B cell (primary cell): ENCODE measurements at regions of chr6 and their contacts with region 1.

Region 1: GRCh38 chr6:79777713-79778579 is 146.8 kb downstream of the SH3BGRL2 start:
- DNase-seq: peak; percentile 89
- ATAC-seq: peak; percentile 96
- H3K4me3 ChIP-seq: peak overlapping the region; percentile 11 to 78 (median 55)
- H3K4me3 Mint-ChIP-seq: peak overlapping the region; percentile 81
- H3K27ac ChIP-seq: peak overlapping the region in 1 of 2 donors; percentile 76
- H3K27ac Mint-ChIP-seq: peak overlapping the region; percentile 56
- H3K4me1 ChIP-seq: peaks cover 7 to 11% of the 10 kb centered on the region in 2 donors
- H3K4me1 Mint-ChIP-seq: peaks cover 9% of the 10 kb centered on the region
- H3K27me3 ChIP-seq: no peaks in the 10 kb centered on the region
- H3K27me3 Mint-ChIP-seq: no peaks in the 10 kb centered on the region
- CTCF ChIP-seq: peak; percentile 91

Region 2: GRCh38 chr6:79233611-79234149 is 544.3 kb before region 1 on chr6:
- CTCF ChIA-PET with region 1: no interaction called
- POLR2A ChIA-PET with region 1: no interaction called
- intact Hi-C with region 1: loop called (anchors 5 kb)
- DNase-seq: peak; percentile 75
- ATAC-seq: peak; percentile 35
- H3K4me3 ChIP-seq: peak overlapping the region; percentile 87 to 97 (median 93)
- H3K4me3 Mint-ChIP-seq: peak overlapping the region; percentile 95
- H3K27ac ChIP-seq: peak overlapping the region; percentile 52 to 66
- H3K27ac Mint-ChIP-seq: peak overlapping the region; percentile 90
- H3K4me1 ChIP-seq: peaks cover 5 to 7% of the 10 kb centered on the region in 2 donors
- H3K4me1 Mint-ChIP-seq: peaks cover 19% of the 10 kb centered on the region
- H3K27me3 ChIP-seq: no peaks in the 10 kb centered on the region
- H3K27me3 Mint-ChIP-seq: no peaks in the 10 kb centered on the region
- CTCF ChIP-seq: peak; percentile 27

Region 3: GRCh38 chr6:79525272-79526100 is 252.5 kb before region 1 on chr6:
- CTCF ChIA-PET with region 1: no interaction called
- POLR2A ChIA-PET with region 1: no interaction called
- intact Hi-C with region 1: no loop called
- DNase-seq: no peak
- ATAC-seq: no peak
- H3K4me3 ChIP-seq: no peak overlapping the region
- H3K4me3 Mint-ChIP-seq: no peak overlapping the region
- H3K27ac ChIP-seq: no peak overlapping the region
- H3K27ac Mint-ChIP-seq: no peak overlapping the region
- H3K4me1 ChIP-seq: no peaks in the 10 kb centered on the region
- H3K4me1 Mint-ChIP-seq: no peaks in the 10 kb centered on the region
- H3K27me3 ChIP-seq: no peaks in the 10 kb centered on the region
- H3K27me3 Mint-ChIP-seq: peaks cover 3% of the 10 kb centered on the region
- CTCF ChIP-seq: no peak

Region 4: GRCh38 chr6:79719248-79719960 is 58.5 kb before region 1 on chr6:
- CTCF ChIA-PET with region 1: no interaction called
- POLR2A ChIA-PET with region 1: no interaction called
- intact Hi-C with region 1: no loop called
- DNase-seq: no peak
- ATAC-seq: no peak
- H3K4me3 ChIP-seq: no peak overlapping the region
- H3K4me3 Mint-ChIP-seq: no peak overlapping the region
- H3K27ac ChIP-seq: no peak overlapping the region
- H3K27ac Mint-ChIP-seq: no peak overlapping the region
- H3K4me1 ChIP-seq: no peaks in the 10 kb centered on the region
- H3K4me1 Mint-ChIP-seq: no peaks in the 10 kb centered on the region
- H3K27me3 ChIP-seq: no peaks in the 10 kb centered on the region
- H3K27me3 Mint-ChIP-seq: peaks cover under 1% of the 10 kb centered on the region
- CTCF ChIP-seq: no peak

Region 5: GRCh38 chr6:79813854-79814709 is 36.1 kb after region 1 on chr6:
- CTCF ChIA-PET with region 1: interaction called, 8 read pairs
- POLR2A ChIA-PET with region 1: no interaction called
- intact Hi-C with region 1: loop called (anchors 1 kb)
- DNase-seq: peak; percentile 56
- ATAC-seq: peak; percentile 51
- H3K4me3 ChIP-seq: no peak overlapping the region
- H3K4me3 Mint-ChIP-seq: no peak overlapping the region
- H3K27ac ChIP-seq: no peak overlapping the region
- H3K27ac Mint-ChIP-seq: no peak overlapping the region
- H3K4me1 ChIP-seq: no peaks in the 10 kb centered on the region
- H3K4me1 Mint-ChIP-seq: no peaks in the 10 kb centered on the region
- H3K27me3 ChIP-seq: no peaks in the 10 kb centered on the region
- H3K27me3 Mint-ChIP-seq: peaks cover 15% of the 10 kb centered on the region
- CTCF ChIP-seq: peak; percentile 93

Region 6: DNA sequence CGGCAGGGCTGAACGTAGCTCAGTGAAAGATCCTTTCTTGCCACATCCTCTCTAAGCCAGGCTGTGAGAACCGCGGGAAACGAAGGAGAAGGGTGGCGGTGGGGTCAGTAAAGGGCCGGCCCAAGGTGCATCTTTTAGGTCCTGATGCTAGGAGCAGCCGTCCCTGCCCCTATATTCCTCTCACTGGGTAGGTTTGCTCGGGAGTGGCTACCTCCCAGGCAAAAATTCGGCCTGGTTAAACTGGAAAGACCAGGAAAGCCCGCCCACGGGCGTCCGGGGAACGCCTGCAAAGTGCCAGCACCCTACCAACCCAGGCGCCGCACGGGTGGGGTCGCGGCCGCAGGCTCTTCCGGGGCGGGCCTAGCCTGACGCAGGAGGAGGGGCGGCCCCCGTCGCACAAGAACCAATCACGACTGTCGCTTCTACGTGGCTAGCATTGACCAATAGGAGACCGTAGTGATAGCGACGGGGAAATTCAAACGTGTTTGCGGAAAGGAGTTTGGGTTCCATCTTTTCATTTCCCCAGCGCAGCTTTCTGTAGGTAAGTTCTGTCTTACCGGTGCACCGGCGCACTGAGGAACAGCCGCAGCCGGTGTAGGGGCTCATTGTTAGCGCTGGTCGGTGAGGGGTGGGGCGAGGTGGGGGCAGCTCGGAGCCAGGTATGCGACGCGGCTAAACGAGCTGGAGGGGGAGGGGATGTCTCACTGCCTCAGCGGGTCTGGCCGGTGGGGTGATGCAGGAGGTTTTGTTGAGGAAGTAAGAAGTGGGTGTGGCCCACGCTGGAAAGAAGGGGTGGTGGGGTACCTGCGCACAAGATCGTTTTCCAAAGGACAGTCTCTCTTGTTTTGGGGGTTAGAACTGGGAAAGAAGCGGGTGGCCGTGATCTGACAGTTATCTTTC is 226.5 kb after region 1 on chr6 and contains the start of gene TTK:
- CTCF ChIA-PET with region 1: no interaction called
- POLR2A ChIA-PET with region 1: no interaction called
- intact Hi-C with region 1: loop called (anchors 2 kb)
- DNase-seq: peak; percentile 94
- ATAC-seq: peak; percentile 100
- H3K4me3 ChIP-seq: peak within 1 kb of the TSS; percentile 26 to 93 (median 84)
- H3K4me3 Mint-ChIP-seq: peak within 1 kb of the TSS; percentile 92
- H3K27ac ChIP-seq: peak within 1 kb of the TSS; percentile 39 to 57
- H3K27ac Mint-ChIP-seq: peak within 1 kb of the TSS; percentile 70
- H3K4me1 ChIP-seq: peaks cover 12 to 13% of the 10 kb centered on the region in 2 donors
- H3K4me1 Mint-ChIP-seq: peaks cover 21% of the 10 kb centered on the region
- H3K27me3 ChIP-seq: no peaks in the 10 kb centered on the region
- H3K27me3 Mint-ChIP-seq: no peaks in the 10 kb centered on the region
- CTCF ChIP-seq: no peak
- total RNA-seq, gene TTK: 0.68 and 0.84 TPM in 2 replicates

Region 7: DNA sequence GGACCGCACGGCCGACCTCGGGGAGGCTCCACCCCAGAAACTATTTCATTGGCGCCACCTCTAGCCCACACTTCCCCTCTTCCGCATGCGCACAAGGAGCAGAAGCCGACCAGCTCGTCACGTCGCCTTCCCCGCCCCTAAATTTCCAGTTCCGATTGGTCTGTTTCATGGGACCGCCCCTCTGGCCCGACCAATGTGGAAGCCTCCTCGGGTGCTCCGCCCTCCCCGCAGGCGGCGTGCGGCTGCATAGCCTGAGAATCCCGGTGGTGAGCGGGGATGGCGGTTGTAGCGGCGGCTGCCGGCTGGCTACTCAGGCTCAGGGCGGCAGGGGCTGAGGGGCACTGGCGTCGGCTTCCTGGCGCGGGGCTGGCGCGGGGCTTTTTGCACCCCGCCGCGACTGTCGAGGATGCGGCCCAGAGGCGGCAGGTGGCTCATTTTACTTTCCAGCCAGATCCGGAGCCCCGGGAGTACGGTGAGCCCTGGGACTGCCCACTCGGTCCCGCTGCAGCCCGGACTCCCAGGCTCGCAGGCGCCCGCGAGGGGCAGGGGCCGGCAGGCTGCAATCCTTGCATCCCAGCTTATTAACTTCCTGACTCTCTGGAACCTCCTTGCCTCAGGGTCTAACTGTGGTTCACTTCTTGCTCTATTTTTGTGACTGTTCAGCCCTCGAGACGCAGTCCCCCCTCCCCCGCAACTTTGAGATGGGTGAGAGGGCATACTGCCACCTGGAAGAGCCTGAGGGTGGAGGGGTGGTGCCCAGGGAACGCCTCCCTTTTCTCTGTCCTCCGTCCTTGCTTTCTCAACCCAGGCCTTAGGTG is 328.7 kb after region 1 on chr6 and contains the start of gene BCKDHB:
- CTCF ChIA-PET with region 1: interaction called, 3 read pairs
- POLR2A ChIA-PET with region 1: no interaction called
- intact Hi-C with region 1: loop called (anchors 5 kb)
- DNase-seq: peak; percentile 99
- ATAC-seq: peak; percentile 98
- H3K4me3 ChIP-seq: peak within 1 kb of the TSS; percentile 52 to 93 (median 83)
- H3K4me3 Mint-ChIP-seq: peak within 1 kb of the TSS; percentile 93
- H3K27ac ChIP-seq: peak within 1 kb of the TSS in 1 of 2 donors; percentile 67
- H3K27ac Mint-ChIP-seq: peak within 1 kb of the TSS; percentile 91
- H3K4me1 ChIP-seq: peaks cover 4 to 12% of the 10 kb centered on the region in 2 donors
- H3K4me1 Mint-ChIP-seq: peaks cover 13% of the 10 kb centered on the region
- H3K27me3 ChIP-seq: peaks cover 0 to 19% (median 5%) of the 10 kb centered on the region in 4 experiments
- H3K27me3 Mint-ChIP-seq: peaks cover 11% of the 10 kb centered on the region
- CTCF ChIP-seq: no peak
- total RNA-seq, gene BCKDHB: 20.1 and 21.4 TPM in 2 replicates

Region 8: DNA sequence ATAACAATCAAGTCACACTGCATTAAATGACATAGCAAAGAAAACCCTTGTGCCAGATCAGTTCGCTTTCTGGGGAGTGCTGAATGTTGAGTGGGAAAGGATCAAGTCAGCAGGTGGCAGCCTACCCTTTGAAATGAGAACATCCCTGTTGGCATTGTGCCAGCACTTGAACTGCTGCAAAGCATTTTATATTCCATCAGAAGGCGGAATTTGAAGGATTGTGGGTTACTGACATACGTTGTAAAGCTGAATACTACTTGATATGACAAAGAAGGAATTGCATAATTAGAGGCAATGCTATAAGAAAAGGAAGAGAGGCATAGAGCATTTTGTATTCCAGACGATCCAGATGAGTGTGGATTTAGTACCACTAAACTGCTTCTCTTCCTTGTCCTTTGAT is 355.1 kb after region 1 on chr6:
- CTCF ChIA-PET with region 1: no interaction called
- POLR2A ChIA-PET with region 1: no interaction called
- intact Hi-C with region 1: no loop called
- DNase-seq: peak; percentile 5
- ATAC-seq: no peak
- H3K4me3 ChIP-seq: no peak overlapping the region
- H3K4me3 Mint-ChIP-seq: no peak overlapping the region
- H3K27ac ChIP-seq: no peak overlapping the region
- H3K27ac Mint-ChIP-seq: no peak overlapping the region
- H3K4me1 ChIP-seq: no peaks in the 10 kb centered on the region
- H3K4me1 Mint-ChIP-seq: no peaks in the 10 kb centered on the region
- H3K27me3 ChIP-seq: no peaks in the 10 kb centered on the region
- H3K27me3 Mint-ChIP-seq: no peaks in the 10 kb centered on the region
- CTCF ChIP-seq: no peak